SK-MEL-5 (cell line): ENCODE measurements at regions of chr4 and their contacts with region 1.

Region 1: GRCh38 chr4:87848622-87849351 is 16.0 kb downstream of the MEPE start:
- DNase-seq: peak; percentile 58

Region 2: DNA sequence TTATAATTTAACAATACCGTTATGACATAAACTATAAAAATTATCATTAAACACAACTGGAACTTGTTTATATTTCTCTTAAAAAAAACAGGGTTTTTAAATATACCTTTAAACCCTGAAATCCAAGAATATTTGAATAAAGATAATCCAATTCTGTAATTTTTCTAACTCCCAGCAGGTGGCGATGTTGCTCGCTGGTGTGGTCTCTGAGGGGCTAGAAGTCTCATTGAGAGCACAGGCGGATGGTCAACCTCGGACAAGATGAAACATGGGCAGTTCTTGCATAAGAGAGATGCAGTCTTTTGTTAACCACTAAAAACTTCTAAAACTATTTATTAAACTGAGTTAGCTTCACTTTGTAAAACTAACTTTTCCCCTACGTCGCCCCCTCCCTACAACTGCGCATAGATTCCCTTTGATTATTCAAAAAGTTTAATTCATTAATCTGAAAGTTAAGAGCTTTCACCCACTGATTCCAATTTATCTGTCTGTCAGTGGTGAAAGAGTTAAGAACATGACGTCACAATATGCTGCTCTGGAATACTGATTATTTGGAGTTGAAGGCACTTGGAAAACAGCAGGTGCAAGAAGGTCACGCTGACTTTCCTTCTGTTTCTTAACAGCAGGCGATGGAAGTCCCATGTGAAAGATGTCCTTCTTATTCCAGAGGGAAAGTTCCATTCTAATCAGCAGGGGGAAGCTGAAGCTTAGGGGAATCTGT is 169.2 kb before region 1 on chr4:
- in situ Hi-C with region 1: loop called (anchors 25 kb)
- DNase-seq: peak; percentile 63

Region 3: DNA sequence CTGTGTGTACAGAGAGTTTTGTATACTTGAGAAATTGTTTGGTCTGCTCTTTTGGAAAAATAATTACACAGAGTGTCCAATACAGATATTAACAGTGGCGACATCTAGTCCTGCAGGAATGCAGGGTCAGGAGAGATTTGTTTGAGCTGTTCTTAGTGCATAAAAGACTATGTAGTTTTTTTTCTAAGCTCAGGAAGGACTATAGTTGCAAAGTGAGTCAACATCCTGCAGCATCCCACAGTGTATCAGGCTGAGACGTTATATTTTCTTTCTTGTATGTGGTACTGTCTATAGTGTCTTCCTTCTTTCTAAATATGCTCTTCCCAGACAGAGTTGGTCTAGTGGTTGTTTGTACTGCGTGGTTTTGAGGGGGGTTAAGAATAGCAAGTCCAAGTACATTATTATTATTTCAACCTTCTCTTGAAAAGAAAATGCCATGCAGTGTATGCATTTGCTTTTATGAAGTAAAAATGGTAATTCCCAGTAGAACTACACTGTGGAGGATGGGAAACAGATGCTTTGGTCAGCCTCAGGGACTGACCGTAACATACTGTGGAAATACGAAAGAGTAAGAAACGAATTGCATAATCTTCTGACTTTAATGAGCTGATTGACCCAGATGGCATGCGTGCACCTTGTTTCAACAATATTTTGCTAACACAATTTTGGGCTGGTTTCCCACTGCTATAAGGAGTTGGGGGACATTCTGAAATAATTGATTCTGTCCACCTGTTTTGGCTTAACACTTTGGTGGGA is 131.3 kb before region 1 on chr4:
- in situ Hi-C with region 1: no loop called
- DNase-seq: no peak

Region 4: GRCh38 chr4:87973283-87974169 is 124.7 kb after region 1 on chr4:
- in situ Hi-C with region 1: loop called (anchors 25 kb)
- DNase-seq: peak; percentile 85

Region 5: DNA sequence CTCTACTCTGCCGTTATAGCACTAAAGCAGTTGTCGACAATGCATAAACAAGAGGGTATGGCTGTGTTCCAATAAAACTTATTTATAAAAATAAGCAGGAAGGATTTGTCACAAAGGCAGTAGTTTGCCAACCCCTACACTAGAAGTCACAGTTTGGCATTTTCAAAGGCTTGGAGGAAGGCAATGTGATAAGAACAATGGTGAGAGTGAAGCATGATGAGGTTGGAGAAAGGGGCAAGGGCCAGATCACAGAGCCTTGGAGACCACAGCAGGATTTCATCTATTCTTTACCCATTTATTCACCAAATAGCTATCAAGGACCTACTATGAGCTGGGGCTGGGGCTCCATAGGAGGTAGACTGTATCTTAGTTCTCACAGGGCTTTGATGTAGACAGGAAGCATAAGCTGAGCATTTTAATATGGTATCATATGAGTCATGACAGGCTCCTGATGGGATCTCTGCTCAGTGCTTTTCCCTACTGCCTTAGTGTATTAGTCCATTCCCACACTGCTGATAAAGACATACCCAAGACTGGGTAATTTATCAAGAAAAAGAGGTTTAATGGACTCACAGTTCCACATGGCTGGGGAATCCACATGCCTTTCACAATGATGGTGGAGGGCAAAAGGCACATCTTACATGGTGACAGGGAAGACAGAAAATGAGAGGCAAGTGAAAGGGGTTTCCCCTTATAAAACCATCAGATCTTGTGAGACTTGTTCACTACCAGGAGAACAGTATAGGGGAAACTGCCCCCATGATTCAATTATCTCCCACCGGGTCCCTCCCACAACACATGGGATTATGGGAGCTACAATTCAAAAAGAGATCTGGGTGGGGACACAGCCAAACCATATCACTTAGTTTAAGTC is 376.7 kb after region 1 on chr4:
- in situ Hi-C with region 1: no loop called
- DNase-seq: no peak